Sigmoid colon (tissue), 7 donors: ENCODE measurements at regions of chrX and their contacts with region 1.

Region 1: DNA sequence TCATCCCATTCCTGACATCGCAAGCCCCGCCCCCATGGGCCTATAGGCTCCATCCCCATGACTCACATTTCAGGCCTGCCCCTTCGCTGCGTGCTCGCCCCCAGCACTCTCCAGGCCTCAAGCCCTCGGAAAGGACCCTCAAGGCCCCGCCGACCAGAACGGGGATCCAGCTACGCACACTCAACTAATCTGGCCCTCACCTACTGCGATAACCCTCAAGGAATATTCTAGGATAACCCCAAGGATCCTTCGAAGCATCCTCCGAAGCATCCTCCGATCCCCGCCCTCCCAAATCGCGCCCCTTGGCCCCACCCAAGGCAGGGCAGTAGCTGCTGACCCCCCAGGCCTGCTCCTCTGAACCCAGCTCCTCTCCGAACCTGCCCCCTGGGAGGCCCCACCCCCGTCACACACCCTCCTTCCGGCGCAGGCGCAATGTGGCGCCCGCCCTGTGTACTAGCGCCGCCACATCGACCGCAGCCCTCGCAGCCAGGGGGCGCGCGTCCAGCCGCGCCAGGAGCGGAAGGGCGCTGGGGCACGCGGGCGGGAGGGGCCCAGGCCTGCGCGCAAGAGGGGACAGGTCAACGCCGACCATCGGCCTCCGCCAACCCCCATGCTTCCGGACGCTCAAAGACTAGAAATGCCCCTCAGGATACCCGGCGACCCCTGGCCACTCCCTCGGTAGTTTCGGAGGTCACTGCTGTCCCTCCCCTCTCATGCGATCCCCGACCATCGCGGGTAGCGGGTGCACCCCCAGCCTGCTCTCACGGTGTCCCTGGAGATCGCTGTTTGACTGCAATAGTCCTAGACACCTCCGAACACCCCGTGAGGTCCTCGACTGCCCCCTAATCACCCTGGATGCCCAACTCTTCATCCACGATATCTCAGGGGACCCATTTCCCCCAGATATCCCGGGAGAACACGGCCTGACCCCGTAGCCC is 6.4 kb upstream of the MAGIX start:
- DNase-seq: peak; percentile 96
- H3K4me3 ChIP-seq: peak overlapping the region; percentile 43 to 56 (median 51)
- H3K27ac ChIP-seq: peak overlapping the region; percentile 92 to 97 (median 94)
- H3K4me1 ChIP-seq: no peaks in the 10 kb centered on the region
- H3K27me3 ChIP-seq: no peaks in the 10 kb centered on the region
- CTCF ChIP-seq: peak; percentile 32 to 67 (median 62)
- EP300 ChIP-seq: no peak
- POLR2A ChIP-seq: peak in 1 of 2 donors; percentile 22

Region 2: DNA sequence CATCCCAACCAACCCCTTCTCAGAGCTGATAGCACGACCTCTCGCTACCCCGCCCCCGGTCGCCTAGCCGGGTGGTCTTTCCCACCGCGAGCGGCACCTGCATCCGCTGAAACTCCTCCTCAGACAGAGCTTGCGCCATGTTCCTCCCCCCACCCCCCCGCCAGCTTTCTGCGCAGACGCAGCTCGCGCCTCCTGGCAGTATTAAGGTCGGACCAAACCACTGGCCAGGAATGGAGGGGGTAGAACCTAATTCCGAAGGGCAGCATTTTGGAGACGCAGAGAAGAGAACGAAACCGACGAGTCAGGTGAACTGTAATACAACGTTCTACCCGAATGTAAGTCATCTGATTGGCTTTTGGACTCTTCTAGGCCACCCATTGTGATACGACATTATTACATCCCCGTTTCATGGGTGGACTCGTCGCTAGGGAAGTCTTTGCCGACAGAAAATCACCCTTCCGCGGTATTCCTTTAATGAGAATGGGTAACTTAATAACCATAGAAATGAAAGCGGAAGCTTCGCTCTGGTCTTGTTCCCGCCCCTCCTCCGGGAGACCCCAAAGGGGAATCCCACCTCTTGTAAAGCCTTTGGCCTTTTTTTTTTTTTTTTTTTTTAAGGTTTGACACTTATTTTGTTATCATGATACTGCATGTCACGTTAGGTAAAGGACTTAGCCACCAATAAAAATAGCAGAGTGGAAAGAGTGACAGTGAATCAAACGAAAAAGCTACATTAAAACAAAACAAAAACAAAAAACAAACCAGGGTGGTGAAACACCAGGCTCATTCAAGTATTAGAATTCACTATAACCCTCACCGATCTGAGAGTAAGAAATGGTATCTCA is 153.9 kb before region 1 on chrX and contains the start of gene GRIPAP1:
- intact Hi-C with region 1: no loop called
- DNase-seq: peak; percentile 77
- H3K4me3 ChIP-seq: peak within 1 kb of the TSS; percentile 57 to 67 (median 63)
- H3K27ac ChIP-seq: peak within 1 kb of the TSS; percentile 69 to 84 (median 75)
- H3K4me1 ChIP-seq: peaks cover 0 to 9% (median 6%) of the 10 kb centered on the region in 4 donors
- H3K27me3 ChIP-seq: no peaks in the 10 kb centered on the region
- CTCF ChIP-seq: no peak
- EP300 ChIP-seq: no peak
- POLR2A ChIP-seq: peak; percentile 60 to 65
- total RNA-seq, gene GRIPAP1: 19.7 to 63.1 (median 29.7) TPM

Region 3: GRCh38 chrX:49067283-49068120 is 88.7 kb before region 1 on chrX:
- intact Hi-C with region 1: no loop called
- DNase-seq: no peak
- H3K4me3 ChIP-seq: no peak overlapping the region
- H3K27ac ChIP-seq: no peak overlapping the region
- H3K4me1 ChIP-seq: peaks cover 0 to 5% (median 2%) of the 10 kb centered on the region in 4 donors
- H3K27me3 ChIP-seq: no peaks in the 10 kb centered on the region
- CTCF ChIP-seq: no peak
- EP300 ChIP-seq: no peak
- POLR2A ChIP-seq: no peak

Region 4: GRCh38 chrX:49199906-49200771 is 44.0 kb after region 1 on chrX and contains the start of gene SYP:
- intact Hi-C with region 1: loop called (anchors 2 kb)
- DNase-seq: peak; percentile 96
- H3K4me3 ChIP-seq: peak within 1 kb of the TSS in 3 of 4 donors; percentile 27 to 43 (median 37)
- H3K27ac ChIP-seq: peak within 1 kb of the TSS; percentile 55 to 72 (median 65)
- H3K4me1 ChIP-seq: peaks cover 0 to 8% (median 5%) of the 10 kb centered on the region in 4 donors
- H3K27me3 ChIP-seq: no peaks in the 10 kb centered on the region
- CTCF ChIP-seq: no peak
- EP300 ChIP-seq: no peak
- POLR2A ChIP-seq: peak; percentile 43 to 69
- total RNA-seq, gene SYP: 4.1 to 14.6 (median 10.9) TPM

Region 5: GRCh38 chrX:49291615-49292337 is 135.6 kb after region 1 on chrX:
- intact Hi-C with region 1: no loop called
- DNase-seq: no peak
- H3K4me3 ChIP-seq: no peak overlapping the region
- H3K27ac ChIP-seq: no peak overlapping the region
- H3K4me1 ChIP-seq: no peaks in the 10 kb centered on the region
- H3K27me3 ChIP-seq: no peaks in the 10 kb centered on the region
- CTCF ChIP-seq: peak in 3 of 4 experiments; percentile 47 to 57 (median 53)
- EP300 ChIP-seq: no peak
- POLR2A ChIP-seq: no peak

Region 6: DNA sequence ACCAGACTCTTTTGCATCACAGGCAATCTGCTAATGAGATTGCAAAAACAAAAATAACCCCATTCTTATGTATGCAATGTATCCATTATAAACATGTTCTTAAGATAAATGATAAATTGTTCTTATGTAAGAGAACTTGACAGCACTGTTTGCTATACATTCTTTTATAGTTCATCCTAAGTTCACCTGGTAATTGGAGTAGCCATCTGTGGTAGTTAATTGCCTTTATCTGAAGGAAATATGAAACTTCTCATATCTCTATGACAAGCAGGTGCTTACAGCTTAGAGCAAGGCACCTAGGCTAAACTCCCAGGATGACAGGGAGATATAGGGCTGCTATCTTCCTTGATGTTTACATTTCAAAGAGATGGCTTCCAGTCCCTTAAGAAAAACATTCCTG is 744.9 kb after region 1 on chrX:
- intact Hi-C with region 1: no loop called
- DNase-seq: no peak
- H3K4me3 ChIP-seq: no peak overlapping the region
- H3K27ac ChIP-seq: no peak overlapping the region
- H3K4me1 ChIP-seq: no peaks in the 10 kb centered on the region
- H3K27me3 ChIP-seq: no peaks in the 10 kb centered on the region
- CTCF ChIP-seq: no peak
- EP300 ChIP-seq: no peak
- POLR2A ChIP-seq: no peak